Panc1 (cell line): ENCODE measurements at regions of chr4 and their contacts with region 1.

Region 1: DNA sequence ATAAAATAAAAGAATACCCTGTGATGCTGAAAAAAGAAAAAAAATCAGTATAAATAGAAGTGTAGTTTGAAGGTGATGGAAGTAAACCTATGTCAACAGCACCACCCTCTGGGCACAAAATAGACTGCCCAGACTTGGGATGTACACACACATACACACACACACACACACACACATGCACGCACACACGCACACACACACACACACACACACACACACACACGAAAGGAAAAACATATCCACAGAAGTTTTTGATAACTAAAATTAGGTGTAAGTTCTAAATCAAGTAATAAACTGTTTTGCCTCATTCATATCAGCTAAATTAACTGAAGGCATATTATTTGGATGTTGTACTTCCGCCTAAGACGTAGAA is 40.5 kb downstream of the ANXA5 start:
- DNase-seq: peak; percentile 10
- ATAC-seq: no peak
- H3K4me3 ChIP-seq: no peak overlapping the region
- H3K27ac ChIP-seq: no peak overlapping the region
- H3K4me1 ChIP-seq: no peaks in the 10 kb centered on the region
- H3K27me3 ChIP-seq: no peaks in the 10 kb centered on the region
- CTCF ChIP-seq: peak; percentile 57

Region 2: DNA sequence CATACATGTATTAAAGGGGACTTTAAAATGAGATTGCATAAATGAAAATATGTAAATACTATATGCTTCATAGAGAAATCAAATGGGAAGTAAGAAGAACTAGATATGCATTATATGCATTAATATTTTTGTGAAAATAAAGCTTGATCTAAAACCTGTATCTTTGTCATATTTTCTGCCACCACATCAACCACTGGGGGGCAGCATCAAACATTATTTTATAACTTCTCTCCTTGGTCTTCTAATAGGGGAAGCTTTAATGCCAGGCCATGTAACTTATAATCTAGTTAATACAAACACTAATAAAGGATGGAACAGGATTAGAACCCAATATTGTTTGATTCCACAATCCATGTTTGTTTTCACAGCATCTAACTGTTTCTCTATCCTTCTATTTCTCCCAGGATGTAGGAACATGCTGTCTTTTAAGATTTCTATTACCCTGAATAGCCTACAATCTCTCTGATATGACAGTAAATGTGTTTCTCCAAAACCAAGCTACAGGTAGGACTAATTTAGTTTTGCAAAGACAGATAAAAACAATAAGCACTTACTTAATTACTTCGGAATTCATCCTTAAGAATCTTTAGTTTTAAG is 285.4 kb before region 1 on chr4:
- CTCF ChIA-PET with region 1: no interaction called
- POLR2A ChIA-PET with region 1: no interaction called
- in situ Hi-C with region 1: no loop called
- intact Hi-C with region 1: loop called (anchors 2 kb)
- DNase-seq: peak; percentile 12
- ATAC-seq: peak; percentile 58; the same call in 1 of the 2 replicates
- H3K4me3 ChIP-seq: no peak overlapping the region
- H3K27ac ChIP-seq: no peak overlapping the region
- H3K4me1 ChIP-seq: no peaks in the 10 kb centered on the region
- H3K27me3 ChIP-seq: no peaks in the 10 kb centered on the region
- CTCF ChIP-seq: peak; percentile 50; the same call in 1 of the 2 replicates

Region 3: DNA sequence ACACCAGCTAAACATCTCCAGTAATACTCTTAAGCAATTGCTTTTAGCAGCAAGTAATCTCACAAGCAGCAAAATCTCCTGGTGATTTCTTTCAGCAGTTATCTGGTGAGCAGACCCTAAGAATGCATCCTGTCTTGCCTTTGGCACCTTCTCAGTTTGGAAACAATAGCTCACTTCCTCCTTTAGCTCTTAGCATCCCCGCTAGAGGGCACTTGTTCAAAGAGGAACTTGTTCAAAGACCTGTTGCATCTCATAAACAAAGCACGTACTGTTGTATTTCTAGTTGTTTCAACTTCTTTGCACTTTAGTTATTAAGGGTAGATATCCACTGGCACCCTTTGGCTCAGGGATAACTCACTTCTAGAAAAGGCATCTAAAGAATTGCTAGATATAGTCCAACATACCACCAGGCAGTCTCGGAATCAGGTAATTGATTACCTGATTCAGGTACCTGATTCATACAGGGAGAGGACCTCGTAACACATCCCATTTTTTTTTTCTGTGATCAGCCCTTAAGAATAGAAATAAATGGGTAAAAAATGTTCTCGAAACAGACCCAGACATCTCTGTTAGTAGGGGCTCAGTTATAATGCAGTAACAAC is 193.5 kb before region 1 on chr4:
- CTCF ChIA-PET with region 1: no interaction called
- POLR2A ChIA-PET with region 1: no interaction called
- in situ Hi-C with region 1: no loop called
- intact Hi-C with region 1: loop called (anchors 10 kb)
- DNase-seq: peak; percentile 35
- ATAC-seq: peak; percentile 77
- H3K4me3 ChIP-seq: no peak overlapping the region
- H3K27ac ChIP-seq: no peak overlapping the region
- H3K4me1 ChIP-seq: no peaks in the 10 kb centered on the region
- H3K27me3 ChIP-seq: no peaks in the 10 kb centered on the region
- CTCF ChIP-seq: peak; percentile 72